Panc1 (cell line): ENCODE measurements at regions of chr7 and their contacts with region 1.

Region 1: GRCh38 chr7:118153551-118154177 is 30.3 kb upstream of the LSM8 start:
- DNase-seq: peak; percentile 13
- ATAC-seq: no peak
- H3K4me3 ChIP-seq: no peak overlapping the region
- H3K27ac ChIP-seq: no peak overlapping the region
- H3K4me1 ChIP-seq: no peaks in the 10 kb centered on the region
- H3K27me3 ChIP-seq: no peaks in the 10 kb centered on the region
- CTCF ChIP-seq: peak; percentile 58; the same call in 1 of the 2 replicates

Region 2: GRCh38 chr7:117750612-117751563 is 402.8 kb before region 1 on chr7:
- CTCF ChIA-PET with region 1: no interaction called
- POLR2A ChIA-PET with region 1: no interaction called
- in situ Hi-C with region 1: no loop called
- intact Hi-C with region 1: loop called (anchors 10 kb)
- DNase-seq: no peak
- ATAC-seq: no peak
- H3K4me3 ChIP-seq: no peak overlapping the region
- H3K27ac ChIP-seq: no peak overlapping the region
- H3K4me1 ChIP-seq: no peaks in the 10 kb centered on the region
- H3K27me3 ChIP-seq: no peaks in the 10 kb centered on the region
- CTCF ChIP-seq: peak; percentile 65; the same call in 1 of the 2 replicates

Region 3: GRCh38 chr7:117875566-117875965 is 278.1 kb before region 1 on chr7:
- CTCF ChIA-PET with region 1: no interaction called
- POLR2A ChIA-PET with region 1: interaction called, 11 read pairs
- in situ Hi-C with region 1: no loop called
- intact Hi-C with region 1: no loop called
- DNase-seq: no peak
- ATAC-seq: no peak
- H3K4me3 ChIP-seq: no peak overlapping the region
- H3K27ac ChIP-seq: no peak overlapping the region
- H3K4me1 ChIP-seq: peaks cover 5% of the 10 kb centered on the region; the same call in 1 of the 2 replicates
- H3K27me3 ChIP-seq: peaks cover 30% of the 10 kb centered on the region
- CTCF ChIP-seq: no peak